Activated CD4-positive, alpha-beta T cell treated with anti-CD3 and anti-CD28 coated beads for 36 hours (primary cell): ENCODE measurements at regions of chr3 and their contacts with region 1.

Region 1: GRCh38 chr3:159902546-159903314 is 85.9 kb upstream of the IL12A start:
- DNase-seq: no peak
- ATAC-seq: no peak
- H3K4me3 Mint-ChIP-seq: no peak overlapping the region
- H3K27ac Mint-ChIP-seq: no peak overlapping the region
- H3K4me1 Mint-ChIP-seq: no peaks in the 10 kb centered on the region
- H3K27me3 Mint-ChIP-seq: peaks cover 7% of the 10 kb centered on the region

Region 2: GRCh38 chr3:160049565-160049964 is 146.8 kb after region 1 on chr3:
- CTCF ChIA-PET with region 1: no interaction called
- POLR2A ChIA-PET with region 1: no interaction called
- intact Hi-C with region 1: no loop called
- DNase-seq: no peak
- ATAC-seq: no peak
- H3K4me3 Mint-ChIP-seq: no peak overlapping the region
- H3K27ac Mint-ChIP-seq: no peak overlapping the region
- H3K4me1 Mint-ChIP-seq: no peaks in the 10 kb centered on the region
- H3K27me3 Mint-ChIP-seq: peaks cover 7% of the 10 kb centered on the region

Region 3: GRCh38 chr3:160129459-160130061 is 226.8 kb after region 1 on chr3:
- CTCF ChIA-PET with region 1: no interaction called
- POLR2A ChIA-PET with region 1: interaction called, 13 read pairs
- intact Hi-C with region 1: no loop called
- DNase-seq: no peak
- ATAC-seq: peak; percentile 19
- H3K4me3 Mint-ChIP-seq: no peak overlapping the region
- H3K27ac Mint-ChIP-seq: no peak overlapping the region
- H3K4me1 Mint-ChIP-seq: peaks cover 2% of the 10 kb centered on the region
- H3K27me3 Mint-ChIP-seq: peaks cover 2% of the 10 kb centered on the region